ENCODE measurements at regions of chr5 and their contacts with region 1.

Region 1: DNA sequence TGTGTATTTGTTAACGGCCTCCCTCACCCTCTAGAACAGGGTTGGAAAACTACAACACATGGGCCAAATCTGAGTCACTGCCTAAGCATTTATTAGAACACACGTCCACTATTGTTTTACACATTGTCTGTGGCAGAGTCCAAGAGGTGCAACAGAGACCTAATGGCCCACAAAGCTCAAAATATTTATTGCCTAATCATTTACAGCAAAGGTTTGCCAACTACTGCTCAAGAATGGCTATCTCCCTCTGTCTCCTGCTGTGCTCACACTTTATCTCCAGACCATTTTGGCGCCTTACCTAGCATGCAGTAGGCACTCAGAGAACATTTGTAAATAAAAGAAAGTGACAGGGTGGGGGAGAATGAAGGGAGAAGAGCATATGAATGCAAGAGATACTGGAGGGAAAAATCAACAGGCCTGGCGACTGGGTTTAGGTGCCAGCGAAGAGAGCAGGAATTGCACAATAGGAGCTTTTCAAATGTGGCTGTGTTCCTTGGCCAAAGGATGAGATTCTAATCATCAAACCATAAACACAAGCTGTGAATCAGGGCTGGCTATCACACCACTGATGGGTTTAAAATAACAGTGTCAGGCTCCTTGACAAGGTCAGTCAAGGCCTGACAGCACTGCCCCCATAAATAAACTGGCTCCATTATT is 80.3 kb downstream of the EPB41L4A start:
- DNase-seq: peak; percentile 91
- H3K4me3 ChIP-seq: no peak overlapping the region
- H3K27ac ChIP-seq: peak overlapping the region; percentile 90
- H3K4me1 ChIP-seq: peaks cover 22% of the 10 kb centered on the region
- H3K27me3 ChIP-seq: no peaks in the 10 kb centered on the region
- CTCF ChIP-seq: no peak
- POLR2A ChIP-seq: no peak

Region 2: DNA sequence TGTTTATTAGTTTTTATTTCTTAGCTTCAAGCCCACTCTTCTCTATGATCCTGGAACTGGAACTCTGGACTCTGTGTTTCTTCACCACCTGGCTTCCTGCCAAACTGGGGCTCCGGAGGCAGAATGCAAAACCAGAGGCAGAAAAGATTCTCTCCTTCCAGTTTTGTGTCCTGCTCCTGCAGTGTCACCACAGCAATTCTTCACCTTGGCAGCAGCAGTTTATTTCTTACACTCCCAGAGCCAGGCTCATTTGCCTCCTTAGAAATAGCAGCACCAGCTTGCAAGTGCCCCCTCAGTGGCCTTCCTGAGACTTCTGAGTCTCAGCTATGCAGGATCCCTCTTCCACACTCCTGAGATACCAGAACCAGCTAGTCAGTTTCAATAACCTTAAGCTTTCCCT is 1141.3 kb before region 1 on chr5:
- CTCF ChIA-PET with region 1: no interaction called
- POLR2A ChIA-PET with region 1: no interaction called
- dilution Hi-C with region 1: no loop called
- intact Hi-C with region 1: no loop called
- DNase-seq: no peak
- H3K4me3 ChIP-seq: no peak overlapping the region
- H3K27ac ChIP-seq: no peak overlapping the region
- H3K4me1 ChIP-seq: no peaks in the 10 kb centered on the region
- H3K27me3 ChIP-seq: no peaks in the 10 kb centered on the region
- CTCF ChIP-seq: no peak
- POLR2A ChIP-seq: no peak

Region 3: GRCh38 chr5:112412346-112412745 is 73.5 kb after region 1 on chr5:
- CTCF ChIA-PET with region 1: interaction called, 3 read pairs
- POLR2A ChIA-PET with region 1: no interaction called
- dilution Hi-C with region 1: no loop called
- intact Hi-C with region 1: loop called (anchors 2 kb)
- DNase-seq: peak; percentile 81
- H3K4me3 ChIP-seq: peak overlapping the region in 1 of 3 experiments; percentile 6
- H3K27ac ChIP-seq: peak overlapping the region; percentile 64
- H3K4me1 ChIP-seq: peaks cover 30% of the 10 kb centered on the region
- H3K27me3 ChIP-seq: no peaks in the 10 kb centered on the region
- CTCF ChIP-seq: no peak
- POLR2A ChIP-seq: no peak